Activated CD4-positive, alpha-beta memory T cell treated with anti-CD3 and anti-CD28 coated beads for 36 hours (primary cell): ENCODE measurements at regions of chr3 and their contacts with region 1.

Region 1: DNA sequence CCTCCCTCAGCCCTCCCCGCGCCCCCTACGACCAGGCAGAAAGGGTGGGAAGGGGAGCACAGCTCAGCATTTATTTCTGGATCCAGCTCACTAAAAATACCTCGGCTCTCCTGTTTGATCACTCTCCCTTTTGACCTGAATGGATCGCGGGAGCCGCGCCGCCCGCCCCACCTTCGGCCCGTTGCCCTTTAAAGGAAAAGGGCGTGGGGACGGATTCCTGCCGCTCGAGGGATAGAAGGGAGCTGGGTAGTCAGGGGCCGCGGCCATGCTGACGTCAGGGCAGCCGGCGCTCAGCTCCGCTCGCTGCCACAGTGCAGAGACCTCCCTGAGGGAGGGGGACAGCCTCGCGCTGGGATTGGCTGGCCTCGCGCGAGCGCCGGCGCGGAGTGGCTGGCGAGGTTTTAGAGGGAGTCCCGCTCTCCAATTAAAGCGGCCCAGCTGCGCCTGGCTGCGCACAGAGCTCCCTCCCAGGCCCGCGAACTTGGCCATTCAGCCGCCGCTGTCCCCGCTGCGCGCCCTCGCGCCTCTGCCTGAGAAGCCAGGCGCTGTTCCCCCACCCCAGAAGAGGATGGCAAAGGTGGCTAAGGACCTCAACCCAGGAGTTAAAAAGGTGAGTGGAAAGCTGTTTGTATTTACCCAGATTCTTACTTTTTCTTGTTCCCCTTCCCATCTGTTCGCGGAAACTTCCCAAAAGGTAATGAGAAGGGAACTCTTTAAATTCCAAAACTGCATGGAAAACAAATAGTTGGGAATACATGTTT is at the start of gene LMCD1:
- DNase-seq: peak; percentile 90
- H3K4me3 Mint-ChIP-seq: peak within 1 kb of the TSS; percentile 73
- H3K27ac Mint-ChIP-seq: no peak within 1 kb of the TSS
- H3K4me1 Mint-ChIP-seq: peaks cover 20% of the 10 kb centered on the region
- H3K27me3 Mint-ChIP-seq: peaks cover 6% of the 10 kb centered on the region
- total RNA-seq, gene LMCD1: 3.5 to 3.8 TPM

Region 2: GRCh38 chr3:8357859-8358258 is 143.7 kb before region 1 on chr3:
- CTCF ChIA-PET with region 1: no interaction called
- POLR2A ChIA-PET with region 1: no interaction called
- intact Hi-C with region 1: loop called (anchors 2 kb)
- DNase-seq: no peak
- H3K4me3 Mint-ChIP-seq: no peak overlapping the region
- H3K27ac Mint-ChIP-seq: peak overlapping the region; percentile 87
- H3K4me1 Mint-ChIP-seq: peaks cover 33% of the 10 kb centered on the region
- H3K27me3 Mint-ChIP-seq: no peaks in the 10 kb centered on the region

Region 3: GRCh38 chr3:8524249-8524648 is 22.7 kb after region 1 on chr3:
- CTCF ChIA-PET with region 1: no interaction called
- POLR2A ChIA-PET with region 1: interaction called, 3 read pairs
- intact Hi-C with region 1: loop called (anchors 2 kb)
- DNase-seq: no peak
- H3K4me3 Mint-ChIP-seq: no peak overlapping the region
- H3K27ac Mint-ChIP-seq: no peak overlapping the region
- H3K4me1 Mint-ChIP-seq: peaks cover 7% of the 10 kb centered on the region
- H3K27me3 Mint-ChIP-seq: no peaks in the 10 kb centered on the region

Region 4: DNA sequence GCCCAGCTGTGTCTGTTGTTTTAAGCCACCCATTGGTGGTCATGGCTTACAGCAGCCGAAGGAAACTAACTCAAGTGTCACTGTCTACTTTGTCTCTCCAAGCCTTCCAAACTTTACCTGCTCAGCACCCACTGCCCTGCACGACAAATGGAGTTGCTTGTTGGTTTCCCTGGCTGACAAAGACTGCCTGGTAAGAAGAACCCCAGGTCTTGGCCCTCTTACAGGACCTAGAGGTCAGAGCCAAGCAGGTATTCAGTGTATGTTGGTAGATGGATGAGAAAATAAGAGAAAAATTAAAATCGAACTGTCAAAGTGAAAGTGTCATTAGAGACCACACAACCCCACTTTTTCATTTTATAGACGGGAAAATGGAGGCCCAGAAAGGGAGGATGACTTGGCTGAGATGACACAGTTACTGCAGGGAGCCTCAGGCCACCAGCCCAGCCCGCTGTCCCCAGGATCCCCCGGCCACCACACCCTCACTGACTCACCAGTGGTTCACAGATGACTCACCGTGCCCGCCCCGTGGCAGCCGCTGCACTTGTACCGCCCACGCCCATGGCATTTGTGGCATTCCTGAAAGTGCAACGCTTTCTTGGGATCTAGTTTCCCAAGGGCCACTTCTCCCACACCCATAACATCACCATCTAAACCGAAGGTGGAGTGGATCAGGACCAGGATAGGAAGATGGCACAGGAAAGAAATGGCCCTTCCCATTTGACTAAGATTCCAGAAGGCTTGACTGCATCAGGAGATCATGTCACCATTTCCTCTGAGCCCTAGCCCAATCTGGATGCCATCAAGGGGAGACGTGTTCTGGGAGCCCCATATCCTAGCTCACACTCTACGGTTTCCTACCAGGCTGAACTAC is 127.8 kb after region 1 on chr3:
- CTCF ChIA-PET with region 1: no interaction called
- POLR2A ChIA-PET with region 1: no interaction called
- intact Hi-C with region 1: loop called (anchors 5 kb)
- DNase-seq: peak; percentile 83
- H3K4me3 Mint-ChIP-seq: no peak overlapping the region
- H3K27ac Mint-ChIP-seq: no peak overlapping the region
- H3K4me1 Mint-ChIP-seq: peaks cover 17% of the 10 kb centered on the region
- H3K27me3 Mint-ChIP-seq: peaks cover 13% of the 10 kb centered on the region